Activated CD4-positive, alpha-beta T cell treated with anti-CD3 and anti-CD28 coated beads, Interleukin-2, amount 10 ng/mL, durations not matched to agents 24 days and 14 days (primary cell): ENCODE measurements at regions of chr6 and their contacts with region 1.

Region 1: GRCh38 chr6:160992061-160992979 is 751 bp downstream of the MAP3K4 start:
- DNase-seq: peak; percentile 81
- H3K4me3 Mint-ChIP-seq: peak overlapping the region; percentile 98
- H3K27ac Mint-ChIP-seq: peak overlapping the region; percentile 94
- H3K4me1 Mint-ChIP-seq: peaks cover 21% of the 10 kb centered on the region
- H3K27me3 Mint-ChIP-seq: peaks cover 15% of the 10 kb centered on the region

Region 2: DNA sequence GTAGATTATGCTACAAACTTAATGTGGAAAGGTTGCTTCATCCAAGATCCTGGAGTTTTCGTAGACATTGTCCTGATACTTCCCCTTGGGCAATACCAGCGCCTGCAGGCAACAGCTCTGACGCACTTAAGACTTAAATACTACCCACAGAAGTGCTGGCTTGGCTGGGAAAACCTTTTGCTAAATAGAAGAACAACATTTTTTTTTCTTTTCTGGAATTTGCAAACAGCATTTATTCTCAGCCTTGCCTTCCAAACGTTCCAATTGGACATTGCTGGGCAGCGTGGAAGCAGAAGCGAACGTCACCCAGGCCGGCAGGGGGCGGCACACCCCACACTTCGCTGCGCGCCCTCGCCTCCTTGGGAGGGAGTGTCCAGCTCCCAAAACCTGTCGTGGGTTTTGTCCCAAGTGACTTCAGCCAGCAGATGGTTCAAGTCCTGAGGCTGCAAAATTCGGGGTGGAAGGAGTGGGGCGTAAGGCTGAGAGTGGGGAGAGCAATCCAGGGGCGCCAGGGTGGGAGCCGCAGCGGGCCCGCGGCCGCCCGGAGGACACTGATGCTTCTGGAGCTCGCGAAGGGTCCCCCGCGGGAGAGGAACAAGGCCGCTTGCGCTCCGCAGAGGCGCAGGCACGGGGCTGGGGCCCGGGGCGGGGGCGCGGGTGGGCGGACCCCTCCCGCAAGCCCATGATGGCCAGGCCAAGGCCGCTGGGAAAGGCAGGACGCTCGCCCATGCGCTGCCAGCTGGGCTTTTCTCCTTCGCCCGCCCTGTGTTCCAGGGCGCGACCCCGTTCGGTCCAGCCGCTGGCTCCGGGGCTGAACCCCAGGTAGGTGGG is 61.6 kb before region 1 on chr6:
- intact Hi-C with region 1: loop called (anchors 1 kb)
- DNase-seq: peak; percentile 87
- H3K4me3 Mint-ChIP-seq: peak overlapping the region; percentile 43
- H3K27ac Mint-ChIP-seq: no peak overlapping the region
- H3K4me1 Mint-ChIP-seq: no peaks in the 10 kb centered on the region
- H3K27me3 Mint-ChIP-seq: peaks cover 28% of the 10 kb centered on the region

Region 3: GRCh38 chr6:161003336-161003735 is 11.0 kb after region 1 on chr6:
- intact Hi-C with region 1: no loop called
- DNase-seq: no peak
- H3K4me3 Mint-ChIP-seq: no peak overlapping the region
- H3K27ac Mint-ChIP-seq: no peak overlapping the region
- H3K4me1 Mint-ChIP-seq: peaks cover 2% of the 10 kb centered on the region
- H3K27me3 Mint-ChIP-seq: no peaks in the 10 kb centered on the region

Region 4: DNA sequence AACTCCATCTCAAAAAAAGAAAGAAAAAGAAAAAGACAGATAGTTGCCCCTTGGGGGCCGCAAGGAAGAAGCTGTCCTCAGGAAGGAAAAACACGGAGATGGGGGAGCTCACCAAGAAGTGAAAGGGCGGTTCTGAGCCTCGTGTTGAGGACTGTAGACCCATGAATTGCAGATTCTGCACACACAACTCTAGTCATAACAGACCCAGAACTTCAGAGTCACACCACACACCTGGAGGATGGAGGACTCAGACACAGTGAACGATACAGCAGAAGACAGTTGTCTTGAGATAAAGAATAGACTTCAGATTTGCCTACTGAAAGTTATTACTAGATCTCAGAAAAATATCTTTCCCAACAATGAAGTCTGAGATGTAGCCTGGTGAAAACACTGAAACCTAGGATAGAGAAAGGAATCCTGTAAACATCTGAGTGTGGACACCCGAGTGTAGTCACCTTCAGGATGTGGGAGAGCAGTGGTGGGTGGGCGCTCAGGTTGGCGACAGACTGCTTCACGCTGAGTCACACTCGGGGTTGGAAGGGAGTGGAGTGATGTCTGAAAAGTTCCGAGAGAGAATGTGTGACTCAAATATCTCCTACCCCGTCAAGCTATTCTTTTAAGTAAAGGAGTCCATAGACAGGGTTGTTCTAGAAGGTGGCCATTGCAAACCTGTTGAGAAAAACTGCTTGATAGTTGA is 87.4 kb after region 1 on chr6:
- intact Hi-C with region 1: loop called (anchors 10 kb)
- DNase-seq: peak; percentile 74
- H3K4me3 Mint-ChIP-seq: peak overlapping the region; percentile 45
- H3K27ac Mint-ChIP-seq: peak overlapping the region; percentile 82
- H3K4me1 Mint-ChIP-seq: peaks cover 13% of the 10 kb centered on the region
- H3K27me3 Mint-ChIP-seq: no peaks in the 10 kb centered on the region

Region 5: GRCh38 chr6:161228921-161229591 is 236.7 kb after region 1 on chr6:
- intact Hi-C with region 1: loop called (anchors 5 kb)
- DNase-seq: peak; percentile 68
- H3K4me3 Mint-ChIP-seq: peak overlapping the region; percentile 67
- H3K27ac Mint-ChIP-seq: peak overlapping the region; percentile 71
- H3K4me1 Mint-ChIP-seq: peaks cover 48% of the 10 kb centered on the region
- H3K27me3 Mint-ChIP-seq: no peaks in the 10 kb centered on the region

Region 6: GRCh38 chr6:161370880-161371279 is 378.6 kb after region 1 on chr6:
- intact Hi-C with region 1: loop called (anchors 2 kb)
- DNase-seq: peak; percentile 90
- H3K4me3 Mint-ChIP-seq: no peak overlapping the region
- H3K27ac Mint-ChIP-seq: no peak overlapping the region
- H3K4me1 Mint-ChIP-seq: no peaks in the 10 kb centered on the region
- H3K27me3 Mint-ChIP-seq: no peaks in the 10 kb centered on the region